ENCODE measurements at regions of chr15 and their contacts with region 1.

Region 1: DNA sequence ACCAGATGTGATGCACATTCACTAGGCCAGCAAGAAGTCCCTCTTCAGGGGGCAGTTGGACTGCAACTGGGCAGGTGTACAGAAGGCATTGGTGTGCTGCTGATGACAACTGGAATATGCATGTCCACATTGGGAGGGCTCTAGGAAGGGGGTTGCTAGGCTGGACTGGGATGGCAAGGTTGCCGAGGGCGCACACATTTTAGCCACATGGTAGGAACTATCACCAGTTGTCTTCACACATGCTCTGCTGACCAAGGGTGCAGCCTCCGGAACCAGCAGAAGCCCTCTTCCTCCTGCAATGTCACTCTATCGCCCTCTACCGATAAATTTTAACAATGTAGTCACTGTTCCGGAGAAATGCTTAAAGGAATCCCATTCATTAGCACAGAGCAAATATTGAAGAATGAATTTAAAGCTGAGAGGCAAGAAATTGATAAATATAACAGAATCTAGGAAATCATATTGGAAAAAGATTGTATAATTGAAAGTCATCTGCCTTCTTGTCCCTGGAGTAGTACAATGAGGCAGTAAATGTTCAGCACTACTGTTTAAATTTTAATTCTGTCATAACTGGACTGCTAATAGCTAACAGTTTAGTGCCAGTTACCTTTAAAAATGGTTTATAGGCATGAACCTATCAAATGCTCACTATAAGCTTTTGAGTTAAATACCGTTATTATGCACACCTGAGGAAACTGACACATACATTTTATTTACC is 22.6 kb upstream of the LYSMD4 start:
- DNase-seq: no peak
- H3K4me3 ChIP-seq: no peak overlapping the region
- H3K27ac ChIP-seq: no peak overlapping the region
- H3K4me1 ChIP-seq: no peaks in the 10 kb centered on the region
- H3K27me3 ChIP-seq: no peaks in the 10 kb centered on the region
- CTCF ChIP-seq: peak; percentile 52 to 87 (median 74)

Region 2: DNA sequence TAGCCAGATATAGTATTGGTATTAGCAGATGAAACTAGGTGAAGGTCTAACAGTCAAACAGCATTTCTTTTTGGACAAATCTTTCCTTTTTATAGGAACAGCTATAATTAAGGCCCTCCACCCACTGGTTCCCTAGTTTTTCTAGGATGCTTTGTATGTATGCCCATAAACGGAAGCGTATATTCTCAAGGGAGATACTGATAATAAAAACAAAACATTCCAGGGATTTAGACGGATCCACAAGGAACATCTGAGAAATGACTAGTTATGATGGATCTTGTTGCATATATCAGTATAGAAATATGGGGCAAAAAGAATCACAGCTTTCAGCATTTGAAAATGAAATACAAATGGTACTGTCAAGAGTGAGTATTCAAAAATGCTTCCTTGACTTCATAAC is 482.1 kb before region 1 on chr15:
- intact Hi-C with region 1: loop called (anchors 1 kb)
- DNase-seq: no peak
- H3K4me3 ChIP-seq: no peak overlapping the region
- H3K27ac ChIP-seq: no peak overlapping the region
- H3K4me1 ChIP-seq: no peaks in the 10 kb centered on the region
- H3K27me3 ChIP-seq: no peaks in the 10 kb centered on the region
- CTCF ChIP-seq: no peak

Region 3: GRCh38 chr15:99631255-99631654 is 124.6 kb before region 1 on chr15:
- intact Hi-C with region 1: no loop called
- DNase-seq: no peak
- H3K4me3 ChIP-seq: no peak overlapping the region
- H3K27ac ChIP-seq: peak overlapping the region; percentile 39 to 67
- H3K4me1 ChIP-seq: peaks cover 0 to 39% of the 10 kb centered on the region in 2 donors
- H3K27me3 ChIP-seq: no peaks in the 10 kb centered on the region
- CTCF ChIP-seq: no peak

Measured in ascending aorta (tissue), 2 donors.